ENCODE measurements at regions of chr12 and their contacts with region 1.

Region 1: GRCh38 chr12:63276537-63277365 is 125.8 kb upstream of the AVPR1A start:
- H3K4me3 ChIP-seq: no peak overlapping the region
- H3K27ac ChIP-seq: no peak overlapping the region
- H3K4me1 ChIP-seq: no peaks in the 10 kb centered on the region
- CTCF ChIP-seq: 0 out of 2 replicates have a peak, but pooled peaks have one; percentile 17

Region 2: DNA sequence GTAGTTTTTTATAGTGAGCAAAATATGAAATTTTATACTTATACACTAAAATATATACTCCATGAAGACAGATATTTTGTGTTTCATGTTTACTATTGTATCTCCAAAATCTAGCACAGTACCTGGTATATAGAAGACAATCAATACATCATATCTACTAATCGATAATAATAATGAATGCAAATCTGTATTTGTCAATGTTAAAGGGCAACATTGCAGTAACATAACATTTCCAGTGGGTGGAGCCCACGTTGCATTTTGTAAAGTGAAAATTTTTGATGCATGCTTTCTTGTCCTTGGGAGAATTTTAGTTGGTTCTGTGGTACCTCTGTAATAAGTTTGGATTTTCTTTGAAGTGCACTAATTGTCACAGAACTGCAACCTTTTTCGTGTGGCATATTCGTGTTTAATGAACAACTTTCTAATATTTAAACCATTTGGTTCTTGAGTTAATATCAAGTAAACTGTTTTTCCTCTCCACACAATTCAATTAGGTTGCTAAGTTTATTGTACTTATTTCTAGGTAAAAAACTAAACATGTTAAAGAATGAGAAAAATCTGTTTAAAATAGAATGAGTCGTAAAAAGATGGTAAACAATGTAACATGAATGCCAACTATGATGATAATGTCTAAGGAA is 173.1 kb before region 1 on chr12:
- CTCF ChIA-PET with region 1: interaction called, 13 read pairs
- POLR2A ChIA-PET with region 1: no interaction called
- H3K4me3 ChIP-seq: no peak overlapping the region
- H3K27ac ChIP-seq: no peak overlapping the region
- H3K4me1 ChIP-seq: no peaks in the 10 kb centered on the region
- CTCF ChIP-seq: peak; percentile 35

Region 3: DNA sequence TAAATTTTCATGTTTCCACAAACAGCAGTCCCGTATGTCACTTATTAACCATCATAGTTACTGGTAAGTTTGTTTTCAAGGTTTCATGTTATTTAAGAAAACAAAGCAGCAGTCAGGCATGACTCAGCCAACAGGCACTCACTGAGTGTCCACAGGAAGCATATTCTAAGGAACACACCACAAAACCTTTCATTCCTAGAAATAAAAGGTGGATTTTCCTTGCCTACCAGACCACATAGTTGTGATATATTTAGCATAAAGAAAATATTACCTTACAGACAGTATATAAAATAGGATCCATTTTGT is 17.5 kb after region 1 on chr12:
- CTCF ChIA-PET with region 1: no interaction called
- POLR2A ChIA-PET with region 1: no interaction called
- H3K4me3 ChIP-seq: no peak overlapping the region
- H3K27ac ChIP-seq: no peak overlapping the region
- H3K4me1 ChIP-seq: no peaks in the 10 kb centered on the region; the same call in 1 of the 2 replicates
- CTCF ChIP-seq: no peak